Naive thymus-derived CD4-positive, alpha-beta T cell (primary cell): ENCODE measurements at regions of chr4 and their contacts with region 1.

Region 1: DNA sequence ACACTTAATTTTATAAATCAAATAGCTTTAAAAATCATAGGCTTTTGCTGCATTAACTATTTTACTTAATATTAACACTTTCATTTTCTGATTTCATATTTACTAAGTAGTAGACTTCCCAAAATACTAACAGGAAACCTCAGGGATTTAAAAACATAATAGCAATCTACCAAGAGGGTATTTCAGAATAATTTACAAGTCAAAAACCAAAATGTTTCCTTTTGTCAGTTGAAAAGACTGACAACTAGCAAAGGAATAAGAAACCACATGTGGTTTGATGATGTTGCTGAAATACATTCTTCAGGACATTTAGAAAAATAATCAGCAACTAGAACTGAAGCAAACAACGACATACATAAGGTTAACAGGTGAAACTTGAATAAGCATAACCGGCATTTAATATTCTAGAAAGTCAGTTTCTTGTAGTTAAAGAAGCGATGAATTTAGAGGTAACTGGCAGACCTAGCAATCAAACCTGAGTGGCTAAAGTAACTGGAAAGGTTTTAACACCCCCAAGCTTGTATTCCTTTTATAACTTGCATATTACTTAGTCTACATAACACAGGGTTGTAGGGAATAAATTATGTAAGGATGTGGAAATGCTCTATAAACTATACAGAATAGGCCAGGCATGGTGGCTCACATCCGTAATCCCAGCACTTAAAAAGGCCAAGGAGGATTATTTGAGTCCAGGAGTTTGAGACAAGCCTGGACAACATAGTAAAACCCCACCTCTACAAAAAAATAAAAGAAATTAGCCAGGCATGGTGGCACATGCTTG is 40.0 kb downstream of the DHX15 start:
- DNase-seq: no peak
- ATAC-seq: no peak
- H3K4me3 ChIP-seq: no peak overlapping the region
- H3K4me3 Mint-ChIP-seq: peak overlapping the region in 2 of 10 donors; percentile 30 to 47
- H3K27ac ChIP-seq: no peak overlapping the region
- H3K27ac Mint-ChIP-seq: peak overlapping the region in 3 of 9 donors; percentile 25 to 52 (median 31)
- H3K4me1 ChIP-seq: no peaks in the 10 kb centered on the region
- H3K4me1 Mint-ChIP-seq: peaks cover 9 to 58% (median 51%) of the 10 kb centered on the region in 7 donors
- H3K27me3 ChIP-seq: no peaks in the 10 kb centered on the region
- H3K27me3 Mint-ChIP-seq: no peaks in the 10 kb centered on the region

Region 2: GRCh38 chr4:23631255-23631950 is 913.0 kb before region 1 on chr4:
- CTCF ChIA-PET with region 1: no interaction called
- POLR2A ChIA-PET with region 1: no interaction called
- intact Hi-C with region 1: no loop called
- DNase-seq: no peak
- ATAC-seq: no peak
- H3K4me3 ChIP-seq: no peak overlapping the region
- H3K4me3 Mint-ChIP-seq: no peak overlapping the region
- H3K27ac ChIP-seq: no peak overlapping the region
- H3K27ac Mint-ChIP-seq: no peak overlapping the region
- H3K4me1 ChIP-seq: no peaks in the 10 kb centered on the region
- H3K4me1 Mint-ChIP-seq: no peaks in the 10 kb centered on the region
- H3K27me3 ChIP-seq: no peaks in the 10 kb centered on the region
- H3K27me3 Mint-ChIP-seq: peaks cover 0 to 4% (median 0%) of the 10 kb centered on the region in 5 donors

Region 3: DNA sequence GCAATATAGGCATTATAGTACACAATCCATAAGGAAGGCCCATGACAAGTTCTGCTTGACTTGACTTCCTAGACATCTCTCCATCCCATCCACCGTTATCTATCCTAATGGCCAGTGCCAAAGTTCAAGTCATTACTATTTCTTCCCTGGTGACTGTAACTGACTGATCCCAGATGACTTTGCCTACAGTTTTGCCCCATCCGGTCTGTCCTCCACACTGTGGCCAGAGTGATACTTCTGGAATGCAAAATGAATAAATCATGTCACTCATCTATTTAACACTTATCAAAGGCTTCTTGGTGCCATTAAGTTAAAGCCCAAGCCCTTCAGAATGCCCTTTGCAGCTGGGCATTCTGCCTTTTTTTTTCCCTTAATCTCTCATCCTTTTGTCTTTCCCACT is 785.3 kb before region 1 on chr4:
- CTCF ChIA-PET with region 1: no interaction called
- POLR2A ChIA-PET with region 1: no interaction called
- intact Hi-C with region 1: no loop called
- DNase-seq: no peak
- ATAC-seq: no peak
- H3K4me3 ChIP-seq: no peak overlapping the region
- H3K4me3 Mint-ChIP-seq: no peak overlapping the region
- H3K27ac ChIP-seq: no peak overlapping the region
- H3K27ac Mint-ChIP-seq: no peak overlapping the region
- H3K4me1 ChIP-seq: no peaks in the 10 kb centered on the region
- H3K4me1 Mint-ChIP-seq: no peaks in the 10 kb centered on the region
- H3K27me3 ChIP-seq: no peaks in the 10 kb centered on the region
- H3K27me3 Mint-ChIP-seq: no peaks in the 10 kb centered on the region

Region 4: GRCh38 chr4:23877758-23878229 is 666.6 kb before region 1 on chr4:
- CTCF ChIA-PET with region 1: no interaction called
- POLR2A ChIA-PET with region 1: no interaction called
- intact Hi-C with region 1: no loop called
- DNase-seq: no peak
- ATAC-seq: no peak
- H3K4me3 ChIP-seq: no peak overlapping the region
- H3K4me3 Mint-ChIP-seq: no peak overlapping the region
- H3K27ac ChIP-seq: no peak overlapping the region
- H3K27ac Mint-ChIP-seq: no peak overlapping the region
- H3K4me1 ChIP-seq: no peaks in the 10 kb centered on the region
- H3K4me1 Mint-ChIP-seq: no peaks in the 10 kb centered on the region
- H3K27me3 ChIP-seq: no peaks in the 10 kb centered on the region
- H3K27me3 Mint-ChIP-seq: peaks cover 0 to 9% (median 0%) of the 10 kb centered on the region in 5 donors

Region 5: DNA sequence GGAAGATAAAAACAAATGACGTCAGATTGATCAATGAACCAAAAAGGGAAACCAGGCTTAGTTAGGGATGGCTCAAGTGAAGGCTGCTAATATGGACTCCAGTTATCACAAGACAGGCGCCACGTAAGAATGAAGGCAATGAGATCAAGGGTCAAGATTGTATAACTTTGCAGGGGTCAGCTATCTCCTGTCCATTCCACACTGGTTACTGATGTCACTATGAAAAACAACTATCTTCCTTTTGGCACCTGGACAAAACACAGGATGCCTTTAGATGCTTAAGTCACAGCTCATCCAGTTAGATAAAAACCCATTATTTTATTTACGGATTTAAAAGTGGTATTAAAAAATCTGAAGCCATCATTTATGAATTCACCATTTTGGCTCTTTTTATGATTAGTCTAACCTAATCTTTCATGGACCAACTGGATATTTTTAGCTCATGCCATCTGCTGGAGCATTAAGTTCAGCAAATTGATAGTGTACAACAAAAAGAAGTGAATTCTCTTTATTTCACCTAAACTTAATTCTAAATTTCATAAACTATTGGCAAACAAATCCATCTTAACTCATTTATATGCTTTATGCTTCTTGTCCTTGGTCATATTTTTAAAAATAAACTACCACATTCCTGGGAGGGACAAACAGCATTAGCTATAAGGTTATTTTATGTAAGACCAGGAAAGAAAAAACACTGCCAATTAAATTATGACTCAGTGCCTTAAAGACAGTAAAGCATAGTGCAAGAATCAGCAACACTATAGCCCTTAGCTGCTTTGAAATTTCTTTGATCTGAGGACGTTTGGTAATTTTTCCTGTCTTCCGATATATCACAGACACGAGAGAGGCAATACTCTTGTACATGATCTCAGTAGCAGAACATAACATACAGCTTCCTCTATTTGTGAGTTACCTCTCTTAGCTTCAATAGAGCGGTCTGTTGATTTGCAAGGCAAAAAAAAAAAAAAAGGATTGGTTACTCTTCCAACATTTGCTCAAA is 12.9 kb after region 1 on chr4:
- CTCF ChIA-PET with region 1: no interaction called
- POLR2A ChIA-PET with region 1: no interaction called
- intact Hi-C with region 1: loop called in 1 of 2 experiments (anchors 1 kb)
- DNase-seq: peak in 5 of 9 donors; percentile 2 to 22 (median 14)
- ATAC-seq: peak; percentile 63
- H3K4me3 ChIP-seq: no peak overlapping the region
- H3K4me3 Mint-ChIP-seq: peak overlapping the region; percentile 16 to 74 (median 65)
- H3K27ac ChIP-seq: peak overlapping the region; percentile 5
- H3K27ac Mint-ChIP-seq: peak overlapping the region in 8 of 9 donors; percentile 3 to 77 (median 28)
- H3K4me1 ChIP-seq: peaks cover 9 to 13% of the 10 kb centered on the region in 2 donors
- H3K4me1 Mint-ChIP-seq: peaks cover 31 to 80% (median 69%) of the 10 kb centered on the region in 7 donors
- H3K27me3 ChIP-seq: no peaks in the 10 kb centered on the region
- H3K27me3 Mint-ChIP-seq: no peaks in the 10 kb centered on the region